Activated naive CD4-positive, alpha-beta T cell treated with anti-CD3 and anti-CD28 coated beads for 36 hours (primary cell): ENCODE measurements at regions of chr10 and their contacts with region 1.

Region 1: DNA sequence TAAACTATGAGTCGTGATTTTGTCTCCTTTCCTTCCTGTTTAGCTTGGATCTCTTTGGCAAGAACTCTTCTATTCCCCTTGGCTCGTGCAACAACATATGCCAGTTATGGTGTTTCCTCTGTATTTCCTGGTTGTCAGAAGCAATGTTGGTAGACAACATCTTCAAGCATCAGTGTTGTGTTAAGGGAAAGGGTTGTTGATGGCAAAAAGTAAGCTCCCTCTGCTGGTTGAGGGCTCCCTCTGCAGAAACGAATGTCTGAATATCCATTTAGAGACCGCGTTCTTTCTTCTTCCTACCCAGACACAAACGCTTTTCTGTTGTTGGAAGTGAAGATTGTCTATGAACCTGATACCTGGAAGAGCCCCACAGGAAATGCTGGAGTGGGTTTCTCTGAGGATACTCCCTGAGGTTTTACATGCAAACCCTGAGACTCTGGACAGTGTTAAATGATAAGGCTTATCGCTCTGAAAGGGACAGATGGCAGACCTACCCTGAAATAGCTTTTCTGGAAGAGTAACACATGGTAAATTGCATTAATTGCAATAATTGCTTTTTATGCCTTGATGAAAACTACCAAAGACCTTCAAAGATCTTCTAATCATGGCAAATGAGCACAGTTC is 23.5 kb upstream of the C1QL3 start:
- DNase-seq: peak; percentile 22
- H3K4me3 Mint-ChIP-seq: no peak overlapping the region
- H3K27ac Mint-ChIP-seq: no peak overlapping the region
- H3K4me1 Mint-ChIP-seq: no peaks in the 10 kb centered on the region
- H3K27me3 Mint-ChIP-seq: peaks cover 16% of the 10 kb centered on the region

Region 2: DNA sequence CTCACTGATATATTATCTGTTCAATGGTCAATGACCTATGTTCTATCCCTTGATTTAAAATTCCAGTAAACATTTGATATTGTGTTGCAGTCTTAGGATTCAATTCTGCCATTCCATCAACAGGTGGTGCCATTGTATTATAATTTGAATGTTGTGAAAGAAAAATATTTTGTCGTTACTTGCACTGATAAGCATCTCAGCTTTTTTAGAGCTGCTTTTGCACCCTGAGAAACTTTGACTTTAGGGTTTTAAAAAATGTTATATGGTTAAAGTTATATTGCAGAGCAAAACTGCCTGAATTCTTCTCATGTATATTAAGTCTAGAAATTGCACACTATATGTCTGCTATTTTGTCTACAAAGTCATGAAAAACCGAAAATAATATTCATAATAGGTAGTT is 666.2 kb before region 1 on chr10:
- CTCF ChIA-PET with region 1: no interaction called
- intact Hi-C with region 1: loop called (anchors 1 kb)
- DNase-seq: no peak
- H3K4me3 Mint-ChIP-seq: no peak overlapping the region
- H3K27ac Mint-ChIP-seq: no peak overlapping the region
- H3K4me1 Mint-ChIP-seq: no peaks in the 10 kb centered on the region
- H3K27me3 Mint-ChIP-seq: peaks cover 42% of the 10 kb centered on the region

Region 3: DNA sequence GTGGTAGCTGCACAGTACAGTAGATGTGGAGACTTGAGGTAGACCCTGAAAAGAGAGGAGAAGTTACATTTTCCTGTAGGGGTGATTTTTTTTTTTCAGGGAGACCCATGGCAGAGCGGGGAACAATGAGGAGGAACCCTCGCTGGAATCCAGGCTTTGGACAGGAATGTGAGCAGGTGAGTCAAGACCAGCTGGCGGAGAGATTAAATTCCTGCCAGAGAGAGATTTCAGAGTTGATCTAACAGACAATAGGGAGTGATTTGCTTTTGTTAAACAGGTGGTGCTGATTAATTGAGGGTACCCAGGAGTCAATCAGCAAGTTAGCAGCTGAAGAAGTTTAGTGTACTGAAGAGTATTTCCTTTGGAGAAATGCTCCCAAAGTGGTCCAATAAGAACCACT is 643.3 kb before region 1 on chr10:
- CTCF ChIA-PET with region 1: interaction called, 4 read pairs
- intact Hi-C with region 1: loop called (anchors 2 kb)
- DNase-seq: no peak
- H3K4me3 Mint-ChIP-seq: no peak overlapping the region
- H3K27ac Mint-ChIP-seq: no peak overlapping the region
- H3K4me1 Mint-ChIP-seq: no peaks in the 10 kb centered on the region
- H3K27me3 Mint-ChIP-seq: peaks cover 2% of the 10 kb centered on the region

Region 4: GRCh38 chr10:16116404-16117304 is 428.6 kb before region 1 on chr10:
- CTCF ChIA-PET with region 1: no interaction called
- intact Hi-C with region 1: loop called (anchors 2 kb)
- DNase-seq: peak; percentile 8
- H3K4me3 Mint-ChIP-seq: no peak overlapping the region
- H3K27ac Mint-ChIP-seq: no peak overlapping the region
- H3K4me1 Mint-ChIP-seq: no peaks in the 10 kb centered on the region
- H3K27me3 Mint-ChIP-seq: no peaks in the 10 kb centered on the region

Region 5: GRCh38 chr10:16314259-16314658 is 231.0 kb before region 1 on chr10:
- CTCF ChIA-PET with region 1: no interaction called
- intact Hi-C with region 1: loop called (anchors 10 kb)
- DNase-seq: peak; percentile 9
- H3K4me3 Mint-ChIP-seq: no peak overlapping the region
- H3K27ac Mint-ChIP-seq: no peak overlapping the region
- H3K4me1 Mint-ChIP-seq: no peaks in the 10 kb centered on the region
- H3K27me3 Mint-ChIP-seq: peaks cover 2% of the 10 kb centered on the region